ENCODE measurements at regions of chr6 and their contacts with region 1.

Region 1: DNA sequence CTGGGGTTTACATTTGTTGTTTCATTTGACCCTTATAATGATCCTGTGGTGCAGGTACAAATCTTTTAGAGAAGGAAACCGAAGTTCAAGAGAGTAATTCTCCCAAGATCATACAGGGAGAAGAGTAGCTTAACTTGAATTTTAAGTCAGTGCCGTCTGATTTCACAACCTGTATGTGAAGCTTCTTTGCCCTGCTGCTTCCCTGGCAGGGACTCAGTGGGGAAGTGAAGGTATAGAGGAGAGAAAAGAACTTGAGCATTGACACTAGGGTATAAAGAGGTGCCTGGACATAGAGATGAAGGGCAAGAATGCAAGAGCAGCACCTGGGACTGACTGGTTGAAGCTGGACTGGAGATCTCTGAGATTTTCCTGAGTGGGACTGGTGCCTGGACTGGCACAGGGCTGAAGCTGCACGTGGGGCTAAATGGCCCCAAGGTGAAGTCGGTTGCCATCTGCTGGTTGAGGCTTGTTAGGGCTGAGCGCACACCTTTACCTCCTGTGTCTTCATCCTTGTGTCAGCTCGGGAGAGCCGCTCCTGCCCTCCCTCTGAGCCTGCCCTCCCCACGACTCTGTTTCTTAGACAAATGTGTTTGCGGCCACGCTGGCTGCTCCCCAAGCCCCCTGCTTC is 41.8 kb downstream of the FARS2 start:
- DNase-seq: peak; percentile 77
- H3K4me3 ChIP-seq: no peak overlapping the region
- H3K27ac ChIP-seq: no peak overlapping the region
- H3K4me1 ChIP-seq: peaks cover 10% of the 10 kb centered on the region
- H3K27me3 ChIP-seq: no peaks in the 10 kb centered on the region
- CTCF ChIP-seq: peak; percentile 87 to 93

Region 2: DNA sequence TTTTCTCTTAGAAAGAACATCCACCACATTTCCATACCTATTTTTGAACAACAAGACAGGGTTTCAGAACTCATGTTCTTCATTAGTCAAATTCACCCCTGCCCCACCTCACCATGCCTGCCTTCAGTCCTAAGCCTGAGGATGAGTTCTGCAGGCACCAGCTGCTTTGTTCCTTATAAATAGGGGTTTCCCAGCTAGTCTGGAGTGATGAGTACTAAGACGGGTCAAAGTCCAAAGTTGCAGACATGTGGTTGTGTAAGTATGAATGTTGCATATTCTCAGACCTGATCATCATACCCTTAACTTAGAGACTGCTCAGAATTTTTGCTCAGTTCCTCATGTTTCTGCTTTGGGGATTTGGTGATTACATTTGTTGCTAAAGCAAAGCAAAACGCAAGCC is 784.6 kb before region 1 on chr6:
- CTCF ChIA-PET with region 1: no interaction called
- dilution Hi-C with region 1: no loop called
- in situ Hi-C with region 1: no loop called
- intact Hi-C with region 1: no loop called
- DNase-seq: peak; percentile 10
- H3K4me3 ChIP-seq: no peak overlapping the region
- H3K27ac ChIP-seq: no peak overlapping the region
- H3K4me1 ChIP-seq: no peaks in the 10 kb centered on the region
- H3K27me3 ChIP-seq: no peaks in the 10 kb centered on the region
- CTCF ChIP-seq: no peak

Region 3: GRCh38 chr6:5053038-5053437 is 250.1 kb before region 1 on chr6:
- CTCF ChIA-PET with region 1: interaction called, 9 read pairs
- dilution Hi-C with region 1: no loop called
- in situ Hi-C with region 1: no loop called
- intact Hi-C with region 1: loop called (anchors 1 kb)
- DNase-seq: no peak
- H3K4me3 ChIP-seq: no peak overlapping the region
- H3K27ac ChIP-seq: no peak overlapping the region
- H3K4me1 ChIP-seq: no peaks in the 10 kb centered on the region
- H3K27me3 ChIP-seq: no peaks in the 10 kb centered on the region
- CTCF ChIP-seq: no peak

Region 4: DNA sequence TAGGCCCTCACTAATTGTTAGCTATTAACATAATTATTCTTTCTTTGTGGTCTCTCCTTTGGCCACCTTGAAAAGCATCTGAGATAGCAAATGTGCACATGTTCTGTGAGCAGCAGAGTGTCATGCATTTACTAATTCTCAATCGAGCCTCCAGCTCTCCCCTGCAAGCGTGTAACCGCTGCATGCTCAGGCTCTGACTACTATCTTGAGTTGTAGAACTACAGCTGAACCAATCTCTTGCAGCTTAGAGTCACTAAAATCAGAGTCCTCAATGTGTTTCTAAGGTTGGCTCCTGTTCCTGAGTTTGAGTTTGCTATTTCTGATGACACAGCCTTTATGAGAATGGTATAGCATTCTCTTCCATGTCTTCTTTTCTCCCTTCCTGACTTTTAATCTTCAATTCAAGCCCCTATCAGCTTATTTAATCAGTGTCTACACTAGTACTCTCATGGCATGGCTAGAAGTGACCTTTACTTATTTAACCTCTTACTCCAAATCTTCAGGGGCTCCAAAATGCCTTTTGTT is 152.5 kb before region 1 on chr6:
- CTCF ChIA-PET with region 1: interaction called, 13 read pairs
- dilution Hi-C with region 1: no loop called
- in situ Hi-C with region 1: no loop called
- intact Hi-C with region 1: no loop called
- DNase-seq: no peak
- H3K4me3 ChIP-seq: no peak overlapping the region
- H3K27ac ChIP-seq: no peak overlapping the region
- H3K4me1 ChIP-seq: peaks cover 15% of the 10 kb centered on the region
- H3K27me3 ChIP-seq: no peaks in the 10 kb centered on the region
- CTCF ChIP-seq: no peak

Region 5: DNA sequence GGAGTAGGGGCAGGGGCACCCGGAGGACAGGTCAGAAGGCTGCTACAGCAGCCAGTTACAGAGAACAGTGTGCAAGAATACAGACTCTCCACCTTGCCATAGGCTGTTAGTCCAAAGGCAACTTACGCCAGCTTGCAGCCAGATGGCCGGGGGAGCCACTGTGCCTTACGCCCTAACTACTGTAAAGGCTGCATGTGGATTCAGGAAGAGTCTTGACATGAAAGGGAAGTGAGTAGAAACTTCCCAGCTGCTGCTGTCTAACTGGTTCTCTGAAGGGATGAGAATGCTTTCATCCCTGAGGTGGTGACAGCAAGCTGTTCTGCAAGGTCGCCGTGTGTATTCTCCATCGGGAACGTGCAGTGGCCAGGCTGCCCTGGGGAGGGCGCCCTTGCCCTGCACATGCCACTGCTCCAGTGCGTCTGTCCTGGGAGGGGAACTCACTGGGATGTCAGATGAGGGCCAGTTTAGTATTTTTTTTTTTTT is 88.5 kb before region 1 on chr6:
- CTCF ChIA-PET with region 1: interaction called, 3 read pairs
- dilution Hi-C with region 1: no loop called
- in situ Hi-C with region 1: no loop called
- intact Hi-C with region 1: loop called (anchors 1 kb)
- DNase-seq: peak; percentile 21
- H3K4me3 ChIP-seq: no peak overlapping the region
- H3K27ac ChIP-seq: no peak overlapping the region
- H3K4me1 ChIP-seq: peaks cover 6% of the 10 kb centered on the region
- H3K27me3 ChIP-seq: no peaks in the 10 kb centered on the region
- CTCF ChIP-seq: peak; percentile 59 to 72

Region 6: GRCh38 chr6:5260661-5261544 is 42.2 kb before region 1 on chr6 and contains the starts of genes FARS2 and LYRM4:
- CTCF ChIA-PET with region 1: no interaction called
- dilution Hi-C with region 1: no loop called
- in situ Hi-C with region 1: no loop called
- intact Hi-C with region 1: loop called (anchors 1 kb)
- DNase-seq: peak; percentile 90
- H3K4me3 ChIP-seq: peak within 1 kb of the TSS; percentile 77 to 90 (median 84)
- H3K27ac ChIP-seq: peak within 1 kb of the TSS; percentile 96
- H3K4me1 ChIP-seq: peaks cover 19% of the 10 kb centered on the region
- H3K27me3 ChIP-seq: no peaks in the 10 kb centered on the region
- CTCF ChIP-seq: peak in 1 of 2 donors; percentile 32
- total RNA-seq, gene FARS2: 18.0 to 32.2 TPM
- total RNA-seq, gene LYRM4: 13.7 to 42.3 TPM

Region 7: DNA sequence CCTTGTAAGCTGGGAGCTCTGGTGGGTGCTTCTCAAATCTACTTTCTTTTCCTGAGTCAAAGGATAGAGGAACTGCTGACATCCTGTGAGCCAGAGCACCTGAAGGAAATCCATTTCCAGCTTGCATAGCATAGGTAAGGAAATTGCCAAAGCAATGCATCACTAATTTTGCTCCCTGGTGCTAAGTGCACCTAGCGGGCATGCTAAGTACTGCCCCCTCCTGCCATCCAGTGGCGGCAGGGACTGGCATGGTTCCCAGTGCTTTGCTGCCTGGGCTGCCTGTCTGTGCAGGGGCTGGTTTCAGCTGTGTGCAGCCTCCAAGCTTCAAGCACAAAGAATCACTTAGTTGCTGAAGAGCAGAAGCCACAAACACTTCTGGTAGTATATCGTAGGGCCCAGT is 22.1 kb after region 1 on chr6:
- CTCF ChIA-PET with region 1: no interaction called
- dilution Hi-C with region 1: no loop called
- in situ Hi-C with region 1: no loop called
- intact Hi-C with region 1: no loop called
- DNase-seq: peak; percentile 11
- H3K4me3 ChIP-seq: no peak overlapping the region
- H3K27ac ChIP-seq: no peak overlapping the region
- H3K4me1 ChIP-seq: no peaks in the 10 kb centered on the region
- H3K27me3 ChIP-seq: no peaks in the 10 kb centered on the region
- CTCF ChIP-seq: no peak

Region 8: GRCh38 chr6:5353971-5354370 is 50.9 kb after region 1 on chr6:
- CTCF ChIA-PET with region 1: interaction called, 10 read pairs
- dilution Hi-C with region 1: no loop called
- in situ Hi-C with region 1: no loop called
- intact Hi-C with region 1: no loop called
- DNase-seq: no peak
- H3K4me3 ChIP-seq: no peak overlapping the region
- H3K27ac ChIP-seq: no peak overlapping the region
- H3K4me1 ChIP-seq: no peaks in the 10 kb centered on the region
- H3K27me3 ChIP-seq: no peaks in the 10 kb centered on the region
- CTCF ChIP-seq: no peak

Region 9: GRCh38 chr6:5388326-5388725 is 85.2 kb after region 1 on chr6:
- CTCF ChIA-PET with region 1: no interaction called
- dilution Hi-C with region 1: no loop called
- in situ Hi-C with region 1: no loop called
- intact Hi-C with region 1: no loop called
- DNase-seq: no peak
- H3K4me3 ChIP-seq: no peak overlapping the region
- H3K27ac ChIP-seq: no peak overlapping the region
- H3K4me1 ChIP-seq: no peaks in the 10 kb centered on the region
- H3K27me3 ChIP-seq: no peaks in the 10 kb centered on the region
- CTCF ChIP-seq: no peak

Region 10: DNA sequence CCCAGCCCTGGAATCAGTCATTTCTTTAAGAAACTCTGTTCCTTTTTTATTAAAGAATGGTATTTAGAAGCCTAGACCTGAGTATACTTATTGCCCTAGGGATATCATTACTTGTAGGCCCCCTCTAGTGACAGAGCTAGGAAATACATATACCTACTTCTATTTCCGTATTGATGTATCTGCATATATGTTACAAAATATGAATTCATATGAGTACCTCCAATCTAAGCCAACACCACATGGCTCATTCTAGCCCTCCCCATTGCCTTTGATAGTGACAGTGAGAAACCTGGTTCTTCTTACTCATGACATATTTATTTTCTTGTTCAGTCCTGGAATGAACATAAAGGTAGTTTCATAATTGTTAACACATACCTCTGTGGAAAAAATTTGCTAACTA is 95.4 kb after region 1 on chr6:
- CTCF ChIA-PET with region 1: interaction called, 3 read pairs
- dilution Hi-C with region 1: no loop called
- in situ Hi-C with region 1: no loop called
- intact Hi-C with region 1: loop called (anchors 1 kb)
- DNase-seq: peak; percentile 56
- H3K4me3 ChIP-seq: no peak overlapping the region
- H3K27ac ChIP-seq: no peak overlapping the region
- H3K4me1 ChIP-seq: peaks cover 11% of the 10 kb centered on the region
- H3K27me3 ChIP-seq: no peaks in the 10 kb centered on the region
- CTCF ChIP-seq: peak; percentile 60 to 65